ENCODE measurements at regions of chr3 and their contacts with region 1.

Region 1: DNA sequence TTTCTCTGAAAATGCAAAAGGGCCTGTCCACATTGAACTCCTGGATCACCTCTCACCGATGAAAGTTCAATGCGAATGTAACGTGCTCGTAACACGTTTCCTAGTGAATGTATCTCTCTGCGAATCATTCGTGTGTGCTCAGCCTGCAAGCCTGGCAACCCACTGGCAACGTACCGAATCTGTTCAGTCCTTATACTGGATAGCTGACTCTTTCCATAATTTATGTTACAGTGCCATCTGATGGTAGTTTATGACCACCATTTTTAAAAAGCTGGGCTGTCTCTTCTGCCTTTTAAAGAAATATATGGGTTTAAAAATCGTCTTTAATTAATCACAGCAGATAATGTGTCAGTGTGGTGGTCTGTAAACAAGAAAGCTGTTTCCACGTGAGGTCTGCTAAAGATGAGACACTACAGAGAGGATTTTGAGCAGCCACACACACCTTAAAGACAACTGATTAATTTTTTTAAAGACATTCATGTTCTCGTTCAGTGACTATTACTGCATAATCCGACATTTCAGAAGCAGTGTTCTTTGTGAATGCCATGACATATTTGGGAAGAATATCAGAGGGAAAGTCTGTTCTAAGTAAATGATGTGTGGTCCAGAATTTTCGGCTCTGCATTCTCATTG is 69.4 kb upstream of the FOXP1 start:
- DNase-seq: peak; percentile 41 to 64 (median 57)
- ATAC-seq: peak; percentile 73 to 78
- H3K4me3 ChIP-seq: no peak overlapping the region
- H3K27ac ChIP-seq: no peak overlapping the region
- H3K4me1 ChIP-seq: no peaks in the 10 kb centered on the region
- H3K27me3 ChIP-seq: no peaks in the 10 kb centered on the region

Region 2: DNA sequence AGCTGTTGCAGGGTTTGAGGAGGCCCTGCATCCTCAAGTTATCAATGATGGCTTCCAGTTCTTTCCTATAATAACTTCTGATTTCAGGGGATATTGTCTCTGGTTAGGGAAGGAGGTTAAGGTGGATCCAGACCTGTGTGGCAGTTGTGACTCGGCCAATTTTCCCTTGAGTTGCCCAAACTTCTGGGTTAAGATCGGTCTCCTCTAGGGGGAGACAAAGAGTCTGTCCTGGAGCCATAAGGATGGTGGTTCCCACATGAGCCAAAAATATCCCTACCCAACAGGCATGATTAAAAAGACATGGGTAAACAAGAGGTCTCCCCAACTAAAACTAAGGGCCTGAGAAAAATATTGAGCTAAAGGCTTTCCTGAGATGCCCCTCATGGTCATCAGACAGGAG is 1113.0 kb before region 1 on chr3:
- intact Hi-C with region 1: loop called in 1 of 4 experiments (anchors 10 kb)
- DNase-seq: no peak
- ATAC-seq: no peak
- H3K4me3 ChIP-seq: no peak overlapping the region
- H3K27ac ChIP-seq: no peak overlapping the region
- H3K4me1 ChIP-seq: no peaks in the 10 kb centered on the region
- H3K27me3 ChIP-seq: no peaks in the 10 kb centered on the region

Region 3: GRCh38 chr3:70550723-70551319 is 1102.1 kb before region 1 on chr3:
- intact Hi-C with region 1: loop called (anchors 10 kb)
- DNase-seq: peak; percentile 62 to 85 (median 84)
- ATAC-seq: peak; percentile 75 to 89
- H3K4me3 ChIP-seq: no peak overlapping the region
- H3K27ac ChIP-seq: no peak overlapping the region
- H3K4me1 ChIP-seq: no peaks in the 10 kb centered on the region
- H3K27me3 ChIP-seq: no peaks in the 10 kb centered on the region